GM13976 (cell line): ENCODE measurements at regions of chr12 and their contacts with region 1.

Region 1: GRCh38 chr12:92987362-92987761 is 58.3 kb upstream of the EEA1 start:
- DNase-seq: peak; percentile 30
- CTCF ChIP-seq: peak; percentile 51

Region 2: GRCh38 chr12:92784795-92785562 is 202.4 kb before region 1 on chr12:
- in situ Hi-C with region 1: loop called (anchors 10 kb)
- DNase-seq: peak; percentile 54
- CTCF ChIP-seq: peak; percentile 45

Region 3: DNA sequence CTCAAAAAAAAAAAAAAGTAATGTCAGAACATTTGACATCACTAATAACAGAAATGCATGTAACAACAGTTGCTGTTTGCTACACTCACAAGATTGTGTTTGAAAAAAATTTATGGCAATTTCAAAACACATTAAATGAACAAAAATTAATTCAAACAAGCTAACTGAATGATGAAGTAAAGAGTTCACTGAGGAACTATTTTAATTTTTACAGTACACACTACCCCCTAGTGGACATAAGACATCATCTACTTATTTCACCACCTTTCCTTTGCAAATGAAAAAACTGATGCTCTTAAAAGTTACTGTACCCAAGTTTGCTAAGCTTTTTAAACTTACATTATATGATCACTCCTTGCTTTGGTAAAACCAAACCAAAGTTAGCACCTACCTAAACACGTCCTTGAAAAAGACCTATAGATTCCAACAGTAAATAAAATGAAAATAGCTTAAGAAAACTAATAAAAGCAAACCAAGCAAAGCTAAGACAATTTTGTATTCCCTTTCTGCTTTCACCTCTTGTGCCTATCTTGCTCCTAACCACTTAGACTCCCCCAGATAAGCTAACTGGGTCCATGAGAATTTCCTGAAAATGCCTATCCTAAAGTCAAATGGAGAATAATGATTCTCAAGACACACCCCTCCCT is 432.1 kb after region 1 on chr12:
- in situ Hi-C with region 1: loop called (anchors 10 kb)
- DNase-seq: no peak
- CTCF ChIP-seq: peak; percentile 35